PC-3 (cell line): ENCODE measurements at regions of chr3 and their contacts with region 1.

Region 1: GRCh38 chr3:33250712-33251111 is 26.5 kb upstream of the FBXL2 start:
- DNase-seq: no peak
- ATAC-seq: no peak
- H3K4me3 ChIP-seq: no peak overlapping the region
- H3K27ac ChIP-seq: no peak overlapping the region
- H3K4me1 ChIP-seq: no peaks in the 10 kb centered on the region
- H3K27me3 ChIP-seq: no peaks in the 10 kb centered on the region
- CTCF ChIP-seq: no peak

Region 2: DNA sequence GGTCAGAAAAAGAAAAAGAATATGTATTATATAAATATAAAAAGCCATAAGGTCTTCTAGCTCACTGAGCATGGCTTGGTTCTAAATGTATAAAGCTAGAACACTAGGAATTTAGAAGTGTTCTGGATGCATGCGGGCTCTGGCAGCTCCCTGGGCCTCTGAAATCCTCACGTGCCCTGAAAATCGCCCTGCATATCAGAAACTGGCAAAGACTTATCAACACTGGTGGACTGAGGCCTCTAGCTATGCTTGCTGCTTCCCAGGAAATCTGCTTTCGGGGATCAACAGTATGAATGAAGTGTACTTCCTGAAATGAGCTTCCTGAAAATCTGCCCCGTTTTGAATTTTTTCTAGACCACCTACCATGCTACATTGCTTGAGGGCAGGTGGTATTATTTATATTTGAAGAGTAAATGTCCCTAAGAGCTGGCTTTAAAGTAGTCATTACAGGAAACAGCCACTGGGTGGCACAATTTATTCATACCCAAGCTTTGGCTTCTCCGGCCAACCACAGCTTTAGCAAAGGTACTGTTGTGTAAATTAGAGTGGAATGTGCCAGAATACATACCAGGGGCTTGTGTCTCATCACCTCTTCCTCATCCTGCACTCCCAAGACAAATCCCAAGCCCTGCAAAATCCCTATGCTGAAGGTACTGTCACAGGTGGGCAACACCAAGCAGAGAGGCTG is 119.2 kb before region 1 on chr3:
- CTCF ChIA-PET with region 1: no interaction called
- POLR2A ChIA-PET with region 1: no interaction called
- intact Hi-C with region 1: loop called (anchors 1 kb)
- DNase-seq: peak; percentile 85
- ATAC-seq: peak; percentile 83
- H3K4me3 ChIP-seq: no peak overlapping the region
- H3K27ac ChIP-seq: no peak overlapping the region
- H3K4me1 ChIP-seq: 0 out of 2 replicates have a peak, but pooled peaks cover 3% of the 10 kb centered on the region
- H3K27me3 ChIP-seq: no peaks in the 10 kb centered on the region
- CTCF ChIP-seq: peak; percentile 94

Region 3: DNA sequence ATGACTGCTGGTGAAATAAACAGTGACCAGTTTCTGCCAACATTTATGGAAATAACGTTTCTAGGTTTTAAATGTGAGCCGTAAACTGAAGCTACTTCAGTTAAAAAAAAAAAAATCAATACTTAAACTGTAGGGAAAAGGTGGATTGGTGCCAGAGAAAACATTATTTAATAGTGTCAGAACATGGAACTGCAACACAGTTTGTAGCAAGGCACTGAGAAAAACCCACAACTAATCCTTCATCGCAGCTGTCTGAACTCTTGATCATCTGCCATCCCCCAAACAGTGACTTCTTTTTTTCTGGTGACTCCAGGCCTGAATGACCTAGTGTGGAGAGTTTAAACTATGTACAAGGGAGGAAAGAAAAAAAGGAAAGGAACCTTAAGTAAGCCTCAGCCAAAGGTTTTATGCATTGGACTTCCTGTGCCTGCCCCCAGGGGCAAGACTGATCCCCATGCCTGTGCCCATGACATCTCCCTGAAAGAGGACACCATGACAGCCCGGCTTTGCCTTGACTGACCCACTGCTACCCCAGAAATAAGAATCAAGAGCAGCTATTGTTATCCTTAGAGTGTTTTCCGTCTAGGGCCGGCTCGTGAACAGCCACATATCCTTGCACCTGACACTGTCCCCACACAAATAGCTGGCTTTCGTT is 103.8 kb before region 1 on chr3:
- CTCF ChIA-PET with region 1: no interaction called
- POLR2A ChIA-PET with region 1: no interaction called
- intact Hi-C with region 1: loop called (anchors 5 kb)
- DNase-seq: peak; percentile 39
- ATAC-seq: peak; percentile 40
- H3K4me3 ChIP-seq: no peak overlapping the region
- H3K27ac ChIP-seq: no peak overlapping the region
- H3K4me1 ChIP-seq: no peaks in the 10 kb centered on the region
- H3K27me3 ChIP-seq: no peaks in the 10 kb centered on the region
- CTCF ChIP-seq: no peak